Common myeloid progenitor, CD34-positive (primary cell): ENCODE measurements at regions of chr3 and their contacts with region 1.

Region 1: GRCh38 chr3:138915503-138916498 is 31.1 kb downstream of the FOXL2 start:
- DNase-seq: peak; percentile 93 to 97 (median 97)
- H3K4me3 ChIP-seq: peak overlapping the region; percentile 65 to 92 (median 83)
- H3K27ac ChIP-seq: peak overlapping the region; percentile 78 to 90
- H3K4me1 ChIP-seq: peaks cover 0 to 14% (median 9%) of the 10 kb centered on the region in 4 experiments
- H3K27me3 ChIP-seq: peaks cover 0 to 2% (median 0%) of the 10 kb centered on the region in 5 experiments

Region 2: DNA sequence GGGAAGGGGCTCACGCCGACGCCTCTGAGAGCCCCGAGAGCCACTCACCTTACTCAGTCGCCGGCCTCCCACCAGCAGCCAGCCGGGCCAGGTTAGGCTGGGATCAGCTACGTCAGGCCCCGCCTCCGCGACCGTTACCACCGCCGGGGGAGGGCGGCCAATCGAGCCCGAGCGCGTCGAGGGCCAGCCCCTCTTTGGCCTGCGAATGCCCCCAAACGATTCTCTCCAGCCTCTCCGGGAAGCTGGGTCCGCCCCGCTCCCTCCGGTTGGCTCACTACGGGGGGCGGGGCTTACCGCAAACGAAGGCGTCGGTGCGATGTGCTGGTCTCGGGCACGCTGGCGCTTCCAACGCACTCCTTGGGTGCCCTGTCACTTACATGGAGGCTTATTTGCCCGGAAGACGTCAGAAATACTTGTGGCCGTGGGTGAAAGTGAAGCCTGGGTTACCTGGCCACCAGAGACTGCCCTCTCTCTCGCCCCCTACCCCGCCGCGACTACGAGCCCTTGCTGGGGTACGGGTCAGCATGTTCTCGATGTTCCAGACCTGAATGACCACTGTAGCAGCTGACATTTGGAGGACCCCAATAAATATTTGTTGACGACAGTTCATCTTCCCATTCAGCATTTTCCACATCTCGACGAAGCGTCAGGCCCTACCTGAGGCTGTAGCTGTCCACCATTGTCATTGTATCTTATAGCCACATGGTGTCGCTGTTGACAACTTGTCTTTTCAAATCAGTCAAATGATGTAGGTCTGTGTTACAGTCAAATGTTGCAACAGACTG is 321.5 kb before region 1 on chr3 and contains the start of gene CEP70:
- CTCF ChIA-PET with region 1: interaction called, 92 read pairs
- POLR2A ChIA-PET with region 1: interaction called, 8 read pairs
- DNase-seq: peak; percentile 95 to 99 (median 98)
- H3K4me3 ChIP-seq: peak within 1 kb of the TSS; percentile 63 to 97 (median 90)
- H3K27ac ChIP-seq: peak within 1 kb of the TSS; percentile 87 to 94
- H3K4me1 ChIP-seq: peaks cover 3 to 37% (median 21%) of the 10 kb centered on the region in 4 experiments
- H3K27me3 ChIP-seq: no peaks in the 10 kb centered on the region

Region 3: GRCh38 chr3:138694287-138695007 is 221.4 kb before region 1 on chr3:
- CTCF ChIA-PET with region 1: interaction called, 159 read pairs
- POLR2A ChIA-PET with region 1: interaction called, 5 read pairs
- DNase-seq: peak in 2 of 3 donors; percentile 53
- H3K4me3 ChIP-seq: no peak overlapping the region
- H3K27ac ChIP-seq: no peak overlapping the region
- H3K4me1 ChIP-seq: peaks cover 0 to 7% (median 1%) of the 10 kb centered on the region in 4 experiments
- H3K27me3 ChIP-seq: no peaks in the 10 kb centered on the region

Region 4: DNA sequence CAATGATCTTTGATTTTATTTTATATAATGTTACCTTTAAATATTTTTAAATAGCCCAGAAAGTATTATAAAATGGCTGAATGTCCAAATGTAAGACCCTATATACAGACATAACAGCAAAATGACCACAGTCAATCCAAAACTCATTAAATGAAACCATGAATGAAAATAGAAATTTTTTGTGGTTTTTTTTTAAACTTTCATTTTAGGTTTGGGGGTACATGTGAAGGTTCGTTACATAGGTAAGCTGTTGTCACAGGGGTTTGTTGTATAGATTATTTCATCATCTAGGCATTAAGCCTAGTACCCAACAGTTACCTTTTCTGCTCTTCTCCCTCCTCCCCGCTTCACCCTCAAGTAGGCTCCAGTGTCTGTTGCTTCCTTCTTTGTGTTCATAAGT is 198.5 kb before region 1 on chr3:
- CTCF ChIA-PET with region 1: interaction called, 12 read pairs
- POLR2A ChIA-PET with region 1: no interaction called
- DNase-seq: no peak
- H3K4me3 ChIP-seq: no peak overlapping the region
- H3K27ac ChIP-seq: no peak overlapping the region
- H3K4me1 ChIP-seq: no peaks in the 10 kb centered on the region
- H3K27me3 ChIP-seq: no peaks in the 10 kb centered on the region

Region 5: DNA sequence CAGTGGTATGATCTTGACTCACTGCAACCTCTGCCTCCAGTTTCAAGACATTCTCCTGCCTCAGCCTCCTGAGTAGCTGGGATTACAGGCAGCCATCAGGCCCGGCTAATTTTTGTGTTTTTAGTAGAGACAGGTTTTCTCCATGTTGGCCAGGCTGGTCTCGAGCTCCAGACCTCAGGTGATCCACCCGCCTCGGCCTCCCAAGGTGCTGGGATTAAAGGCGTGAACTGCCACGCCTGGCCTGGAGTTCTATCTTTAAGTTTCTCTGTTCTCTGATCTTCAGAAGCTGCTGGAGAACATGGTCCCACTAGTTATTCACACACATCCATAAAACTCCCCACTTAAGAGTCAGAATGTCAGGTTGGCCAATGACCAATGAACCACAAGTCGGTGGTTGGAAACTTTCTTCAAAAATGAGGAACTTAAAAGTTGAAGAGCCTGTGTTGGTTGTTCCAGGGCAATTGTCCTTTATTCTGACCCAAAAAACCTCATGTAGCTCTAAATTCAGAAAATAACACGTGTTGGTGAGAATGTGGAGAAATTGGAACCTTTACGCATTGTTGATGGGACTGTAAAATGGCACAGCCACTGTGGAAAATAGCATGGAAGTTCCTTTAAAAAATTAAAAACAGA is 25.1 kb before region 1 on chr3:
- CTCF ChIA-PET with region 1: interaction called, 19 read pairs
- POLR2A ChIA-PET with region 1: no interaction called
- DNase-seq: peak; percentile 82 to 97 (median 96)
- H3K4me3 ChIP-seq: no peak overlapping the region
- H3K27ac ChIP-seq: peak overlapping the region in 1 of 2 experiments; percentile 73
- H3K4me1 ChIP-seq: peaks cover 11 to 28% (median 18%) of the 10 kb centered on the region in 4 experiments
- H3K27me3 ChIP-seq: no peaks in the 10 kb centered on the region

Region 6: GRCh38 chr3:138935848-138936740 is 20.3 kb after region 1 on chr3:
- CTCF ChIA-PET with region 1: interaction called, 54 read pairs
- POLR2A ChIA-PET with region 1: no interaction called
- DNase-seq: peak; percentile 59 to 72 (median 70)
- H3K4me3 ChIP-seq: peak overlapping the region; percentile 40 to 76 (median 58)
- H3K27ac ChIP-seq: no peak overlapping the region
- H3K4me1 ChIP-seq: peaks cover 2 to 46% (median 36%) of the 10 kb centered on the region in 4 experiments
- H3K27me3 ChIP-seq: peaks cover 4 to 76% (median 48%) of the 10 kb centered on the region in 5 experiments